ENCODE measurements at regions of chr6 and their contacts with region 1.

Region 1: GRCh38 chr6:36094753-36095496 is 35.4 kb upstream of the MAPK13 start:
- DNase-seq: peak; percentile 81
- ATAC-seq: peak; percentile 94
- H3K4me3 ChIP-seq: peak overlapping the region in 1 of 3 experiments; percentile 61; a peak in 1 of 6 replicates
- H3K27ac ChIP-seq: peak overlapping the region; percentile 90
- H3K4me1 ChIP-seq: peaks cover 34% of the 10 kb centered on the region
- H3K27me3 ChIP-seq: no peaks in the 10 kb centered on the region
- CTCF ChIP-seq: peak; percentile 99
- EP300 ChIP-seq: no peak
- POLR2A ChIP-seq: no peak
- RAD21 ChIP-seq: peak; percentile 97

Region 2: GRCh38 chr6:35920793-35921732 is 173.9 kb before region 1 on chr6 and contains the start of gene SRPK1:
- CTCF ChIA-PET with region 1: no interaction called
- POLR2A ChIA-PET with region 1: no interaction called
- in situ Hi-C with region 1: no loop called
- intact Hi-C with region 1: loop called (anchors 2 kb)
- DNase-seq: peak; percentile 87
- ATAC-seq: peak; percentile 86
- H3K4me3 ChIP-seq: peak within 1 kb of the TSS; percentile 72 to 93 (median 84)
- H3K27ac ChIP-seq: peak within 1 kb of the TSS; percentile 84
- H3K4me1 ChIP-seq: peaks cover 56% of the 10 kb centered on the region
- H3K27me3 ChIP-seq: no peaks in the 10 kb centered on the region; a peak in 1 of 5 replicates
- CTCF ChIP-seq: peak; percentile 16; the same call in 1 of the 2 replicates
- EP300 ChIP-seq: no peak
- POLR2A ChIP-seq: peak; percentile 97 to 98
- RAD21 ChIP-seq: peak; percentile 55
- total RNA-seq, gene SRPK1: 142 and 184 TPM in 2 replicates

Region 3: DNA sequence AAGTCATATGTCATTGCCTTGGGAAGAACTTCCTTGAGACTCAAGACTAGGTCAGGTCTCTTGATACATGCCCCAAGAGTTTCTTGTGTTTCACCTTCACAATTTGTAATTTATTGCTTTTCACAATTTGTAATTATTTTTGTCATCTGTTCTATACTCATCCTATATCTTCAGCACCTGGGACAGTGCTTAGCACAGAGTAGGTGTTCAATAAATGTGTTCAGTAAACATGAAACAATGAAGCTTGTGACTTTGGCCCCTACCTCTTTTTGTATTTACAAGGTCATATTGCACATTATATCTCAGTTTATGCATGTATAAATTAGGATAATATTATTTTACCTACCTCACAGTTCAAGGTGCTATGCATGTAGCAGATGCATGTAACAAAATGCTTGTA is 152.6 kb before region 1 on chr6:
- CTCF ChIA-PET with region 1: no interaction called
- POLR2A ChIA-PET with region 1: no interaction called
- in situ Hi-C with region 1: no loop called
- intact Hi-C with region 1: no loop called
- DNase-seq: no peak
- ATAC-seq: no peak
- H3K4me3 ChIP-seq: no peak overlapping the region
- H3K27ac ChIP-seq: no peak overlapping the region
- H3K4me1 ChIP-seq: peaks cover 33% of the 10 kb centered on the region
- H3K27me3 ChIP-seq: no peaks in the 10 kb centered on the region
- CTCF ChIP-seq: no peak
- EP300 ChIP-seq: no peak
- POLR2A ChIP-seq: no peak
- RAD21 ChIP-seq: no peak

Region 4: GRCh38 chr6:36067374-36068011 is 27.4 kb before region 1 on chr6:
- CTCF ChIA-PET with region 1: no interaction called
- POLR2A ChIA-PET with region 1: interaction called, 31 read pairs
- in situ Hi-C with region 1: no loop called
- intact Hi-C with region 1: loop called (anchors 2 kb)
- DNase-seq: no peak
- ATAC-seq: no peak
- H3K4me3 ChIP-seq: no peak overlapping the region
- H3K27ac ChIP-seq: peak overlapping the region; percentile 91
- H3K4me1 ChIP-seq: peaks cover 71% of the 10 kb centered on the region
- H3K27me3 ChIP-seq: no peaks in the 10 kb centered on the region
- CTCF ChIP-seq: no peak
- EP300 ChIP-seq: no peak
- POLR2A ChIP-seq: no peak
- RAD21 ChIP-seq: no peak

Region 5: DNA sequence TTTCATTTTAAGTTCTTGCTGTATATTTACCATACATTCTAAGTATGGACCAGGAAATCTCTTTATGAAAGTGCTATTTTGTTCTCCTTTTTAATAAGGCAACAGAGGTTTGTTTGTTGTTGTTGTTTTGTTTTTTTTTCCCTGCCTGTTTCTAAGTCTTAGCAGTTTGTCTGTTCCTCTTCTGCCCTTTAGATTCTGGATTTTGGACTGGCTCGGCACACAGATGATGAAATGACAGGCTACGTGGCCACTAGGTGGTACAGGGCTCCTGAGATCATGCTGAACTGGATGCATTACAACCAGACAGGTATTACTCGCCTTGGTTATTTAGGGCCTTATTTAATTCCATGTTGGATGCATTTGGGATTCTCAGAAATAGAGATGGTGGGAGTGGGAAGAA is 19.3 kb before region 1 on chr6:
- CTCF ChIA-PET with region 1: interaction called, 10 read pairs
- POLR2A ChIA-PET with region 1: interaction called, 5 read pairs
- in situ Hi-C with region 1: no loop called
- intact Hi-C with region 1: loop called (anchors 1 kb)
- DNase-seq: peak; percentile 71
- ATAC-seq: peak; percentile 98
- H3K4me3 ChIP-seq: no peak overlapping the region
- H3K27ac ChIP-seq: peak overlapping the region; percentile 43
- H3K4me1 ChIP-seq: peaks cover 14% of the 10 kb centered on the region
- H3K27me3 ChIP-seq: no peaks in the 10 kb centered on the region
- CTCF ChIP-seq: peak; percentile 87
- EP300 ChIP-seq: peak in 1 of 2 experiments; percentile 32; a peak in 1 of 4 replicates
- POLR2A ChIP-seq: no peak
- RAD21 ChIP-seq: peak; percentile 41; the same call in 1 of the 2 replicates

Region 6: DNA sequence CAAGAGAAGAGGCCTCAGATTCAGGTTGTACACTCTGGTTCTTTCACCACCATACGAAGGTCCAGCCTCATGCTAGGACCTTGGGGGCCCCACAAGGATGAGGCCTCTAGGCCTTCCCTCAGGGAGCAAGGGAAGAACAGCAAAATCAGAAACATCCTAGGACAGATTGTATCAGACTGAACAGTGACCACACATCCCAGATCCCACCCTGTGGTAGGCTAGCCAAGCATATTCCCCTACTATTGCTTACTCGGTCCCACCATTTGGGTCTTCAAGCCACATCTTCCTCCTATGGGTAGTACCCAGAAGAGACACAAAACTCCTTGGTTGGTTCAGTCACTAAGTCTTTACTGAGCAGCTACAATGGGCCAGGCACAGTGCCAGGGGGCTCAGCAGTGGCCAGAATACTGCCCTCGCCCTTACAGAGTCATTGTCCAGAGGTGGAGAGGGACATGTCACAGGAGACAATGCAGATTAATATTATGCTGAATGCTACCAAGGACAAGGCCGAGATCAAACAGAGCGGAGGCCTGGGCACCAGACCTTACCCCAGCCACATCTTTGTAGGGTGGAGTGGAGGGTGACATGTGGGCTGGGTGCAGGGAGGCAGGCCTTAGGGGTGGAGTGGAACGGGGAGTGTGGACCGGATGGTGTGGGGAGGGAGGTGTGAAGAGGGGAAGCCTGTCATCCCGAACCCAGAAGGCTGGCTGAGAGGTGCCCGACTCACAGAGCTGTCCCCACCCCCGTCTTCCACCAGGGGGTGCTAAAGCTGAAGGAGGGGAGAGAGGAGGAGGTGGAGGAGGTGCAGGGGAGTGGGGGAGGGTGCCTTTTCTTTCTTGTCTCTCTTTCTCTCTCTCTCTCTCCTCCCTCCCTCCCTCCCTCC is 28.6 kb after region 1 on chr6:
- CTCF ChIA-PET with region 1: no interaction called
- POLR2A ChIA-PET with region 1: interaction called, 22 read pairs
- in situ Hi-C with region 1: no loop called
- intact Hi-C with region 1: no loop called
- DNase-seq: peak; percentile 83
- ATAC-seq: peak; percentile 63
- H3K4me3 ChIP-seq: 0 out of 6 replicates have a peak overlapping the region, but pooled peaks of 1 of the 3 experiments have one; percentile 17
- H3K27ac ChIP-seq: no peak overlapping the region
- H3K4me1 ChIP-seq: peaks cover 55% of the 10 kb centered on the region
- H3K27me3 ChIP-seq: no peaks in the 10 kb centered on the region
- CTCF ChIP-seq: peak; percentile 89
- EP300 ChIP-seq: no peak
- POLR2A ChIP-seq: no peak
- RAD21 ChIP-seq: peak; percentile 69

Region 7: DNA sequence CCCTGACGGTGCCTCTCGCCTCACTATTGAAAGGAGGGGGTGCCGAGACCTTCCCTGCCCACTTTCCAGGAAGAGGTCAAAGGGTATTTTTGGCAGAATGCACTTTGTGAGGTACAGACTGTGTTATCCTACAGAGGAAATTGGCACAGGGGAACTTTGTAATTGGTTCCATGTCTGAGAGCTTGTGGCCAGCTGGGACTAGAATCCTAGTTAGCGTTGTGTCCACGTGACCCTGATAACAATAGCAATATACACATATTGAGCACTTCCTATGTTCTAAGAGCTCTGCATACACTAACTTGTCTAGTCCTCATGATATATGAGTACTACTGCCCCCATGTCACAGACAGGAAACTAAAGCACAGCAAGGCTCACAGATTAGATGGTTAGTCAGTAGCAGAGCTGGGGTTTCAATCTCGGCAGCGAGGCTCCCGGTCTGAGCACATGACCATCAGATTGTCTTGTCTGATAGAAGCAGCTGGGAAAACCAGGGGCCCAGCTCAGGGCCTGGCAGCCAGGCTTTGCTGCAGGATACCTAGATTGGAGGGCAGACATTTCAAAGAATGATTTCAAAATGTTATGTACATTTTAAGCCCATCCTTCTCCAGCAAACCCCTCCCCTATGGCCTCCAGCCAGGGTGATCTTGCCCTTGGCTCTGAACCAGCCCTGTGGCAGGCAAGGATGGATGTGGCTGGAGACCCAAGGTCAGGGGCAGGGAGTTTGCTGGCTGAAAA is 36.8 kb after region 1 on chr6:
- CTCF ChIA-PET with region 1: no interaction called
- POLR2A ChIA-PET with region 1: interaction called, 43 read pairs
- in situ Hi-C with region 1: no loop called
- intact Hi-C with region 1: no loop called
- DNase-seq: peak; percentile 84
- ATAC-seq: peak; percentile 22
- H3K4me3 ChIP-seq: peak overlapping the region; percentile 75 to 92 (median 75)
- H3K27ac ChIP-seq: peak overlapping the region; percentile 90
- H3K4me1 ChIP-seq: peaks cover 66% of the 10 kb centered on the region
- H3K27me3 ChIP-seq: no peaks in the 10 kb centered on the region
- CTCF ChIP-seq: no peak
- EP300 ChIP-seq: peak in 1 of 2 experiments; percentile 57; a peak in 1 of 4 replicates
- POLR2A ChIP-seq: no peak; a peak in 1 of 4 replicates
- RAD21 ChIP-seq: no peak

Region 8: GRCh38 chr6:36196880-36197548 is 102.1 kb after region 1 on chr6:
- CTCF ChIA-PET with region 1: interaction called, 4 read pairs
- POLR2A ChIA-PET with region 1: interaction called, 8 read pairs
- in situ Hi-C with region 1: no loop called
- intact Hi-C with region 1: loop called (anchors 1 kb)
- DNase-seq: peak; percentile 96
- ATAC-seq: peak; percentile 95
- H3K4me3 ChIP-seq: peak overlapping the region; percentile 65 to 90 (median 81)
- H3K27ac ChIP-seq: peak overlapping the region; percentile 92
- H3K4me1 ChIP-seq: peaks cover 22% of the 10 kb centered on the region
- H3K27me3 ChIP-seq: no peaks in the 10 kb centered on the region
- CTCF ChIP-seq: no peak
- EP300 ChIP-seq: no peak
- POLR2A ChIP-seq: peak; percentile 70 to 75
- RAD21 ChIP-seq: no peak

Region 9: DNA sequence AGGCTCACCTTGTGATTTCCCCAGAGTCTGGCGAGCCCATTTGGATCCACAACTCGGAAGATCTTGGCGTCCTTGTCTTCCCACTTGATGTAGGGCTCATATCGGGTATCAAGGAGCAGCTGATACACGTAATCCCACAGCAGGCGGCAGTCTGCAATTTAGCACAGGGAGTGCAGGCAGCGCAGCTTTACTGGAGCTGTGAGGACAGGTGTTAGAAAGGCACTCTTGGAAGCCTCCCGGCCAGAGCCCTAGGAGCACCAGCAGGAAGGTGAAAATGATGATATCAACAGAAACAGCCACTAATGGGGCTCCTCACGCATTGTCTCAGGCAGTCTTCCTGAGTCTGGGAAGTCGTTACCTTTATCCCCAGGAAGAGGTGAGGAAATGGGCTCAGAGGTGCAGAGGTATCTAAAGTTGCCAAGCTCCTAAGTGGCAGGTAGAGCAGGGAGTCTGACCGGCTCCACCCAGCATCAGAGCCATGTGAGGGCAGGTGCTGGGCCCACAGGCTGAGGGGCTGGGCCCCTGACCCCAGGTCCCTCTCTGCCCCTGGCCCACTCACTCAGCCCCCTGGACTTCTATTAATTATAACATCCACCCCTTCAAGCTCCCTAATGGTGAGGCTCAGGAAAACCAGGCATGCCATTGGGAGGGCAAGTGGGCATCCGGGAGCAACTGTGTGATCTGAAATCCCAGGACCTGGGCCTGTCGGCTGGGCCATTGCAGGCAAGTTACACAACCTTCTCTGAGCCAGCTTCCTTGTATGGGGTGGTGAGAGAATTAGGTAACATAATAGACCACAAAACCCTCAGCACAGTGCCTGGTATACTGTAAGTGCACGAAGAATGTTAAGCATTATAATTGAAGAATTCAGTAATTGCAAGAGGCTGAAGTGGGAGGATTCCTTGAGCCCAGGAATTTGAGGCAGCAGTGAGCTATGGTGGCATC is 274.3 kb after region 1 on chr6:
- CTCF ChIA-PET with region 1: no interaction called
- POLR2A ChIA-PET with region 1: no interaction called
- in situ Hi-C with region 1: no loop called
- intact Hi-C with region 1: no loop called
- DNase-seq: no peak
- ATAC-seq: no peak
- H3K4me3 ChIP-seq: no peak overlapping the region
- H3K27ac ChIP-seq: no peak overlapping the region
- H3K4me1 ChIP-seq: peaks cover 9% of the 10 kb centered on the region
- H3K27me3 ChIP-seq: peaks cover 5 to 32% of the 10 kb centered on the region in 2 experiments
- CTCF ChIP-seq: no peak
- EP300 ChIP-seq: no peak
- POLR2A ChIP-seq: no peak
- RAD21 ChIP-seq: no peak

Region 10: GRCh38 chr6:36633915-36634314 is 539.0 kb after region 1 on chr6:
- CTCF ChIA-PET with region 1: no interaction called
- POLR2A ChIA-PET with region 1: no interaction called
- in situ Hi-C with region 1: no loop called
- intact Hi-C with region 1: no loop called
- DNase-seq: peak; percentile 70
- ATAC-seq: peak; percentile 68
- H3K4me3 ChIP-seq: peak overlapping the region in 1 of 3 experiments; percentile 24; a peak in 1 of 6 replicates
- H3K27ac ChIP-seq: no peak overlapping the region
- H3K4me1 ChIP-seq: peaks cover 57% of the 10 kb centered on the region
- H3K27me3 ChIP-seq: peaks cover 6 to 50% of the 10 kb centered on the region in 2 experiments
- CTCF ChIP-seq: no peak
- EP300 ChIP-seq: no peak
- POLR2A ChIP-seq: no peak
- RAD21 ChIP-seq: no peak

Measured in HepG2 (cell line).